ENCODE measurements at regions of chr6 and their contacts with region 1.

Region 1: GRCh38 chr6:43667245-43668150 is 20.1 kb downstream of the MRPS18A start:
- DNase-seq: no peak
- H3K4me3 ChIP-seq: peak overlapping the region; percentile 36
- CTCF ChIP-seq: peak; percentile 99

Region 2: DNA sequence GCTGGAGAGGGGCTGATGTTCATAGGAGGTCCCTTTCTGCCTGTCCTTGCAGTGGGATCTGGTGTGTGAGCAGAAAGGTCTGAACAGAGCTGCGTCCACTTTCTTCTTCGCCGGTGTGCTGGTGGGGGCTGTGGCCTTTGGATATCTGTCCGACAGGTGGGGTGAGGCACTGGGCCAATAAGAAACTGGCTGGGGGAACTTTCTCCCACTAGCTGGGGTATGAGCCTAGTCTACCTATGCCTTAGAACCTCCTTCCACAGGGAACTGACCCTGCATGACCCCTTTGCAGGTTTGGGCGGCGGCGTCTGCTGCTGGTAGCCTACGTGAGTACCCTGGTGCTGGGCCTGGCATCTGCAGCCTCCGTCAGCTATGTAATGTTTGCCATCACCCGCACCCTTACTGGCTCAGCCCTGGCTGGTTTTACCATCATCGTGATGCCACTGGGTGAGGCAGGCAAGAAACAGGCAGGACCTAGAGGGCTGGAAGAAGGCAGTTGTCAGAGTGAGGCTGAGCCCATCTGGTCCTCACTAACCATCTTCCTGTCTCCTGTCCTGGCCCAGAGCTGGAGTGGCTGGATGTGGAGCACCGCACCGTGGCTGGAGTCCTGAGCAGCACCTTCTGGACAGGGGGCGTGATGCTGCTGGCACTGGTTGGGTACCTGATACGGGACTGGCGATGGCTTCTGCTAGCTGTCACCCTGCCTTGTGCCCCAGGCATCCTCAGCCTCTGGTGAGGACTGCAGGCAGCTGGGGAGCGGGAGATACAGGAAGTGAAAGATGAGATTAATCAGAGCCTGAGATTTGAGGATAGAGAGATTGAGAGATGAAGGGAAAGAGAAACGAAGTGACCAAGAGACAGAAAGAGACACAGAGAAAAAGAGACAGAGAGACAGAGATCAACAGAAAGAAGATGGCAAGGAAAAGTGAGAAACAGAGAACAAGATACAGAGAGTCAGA is 367.9 kb before region 1 on chr6:
- CTCF ChIA-PET with region 1: no interaction called
- POLR2A ChIA-PET with region 1: no interaction called
- DNase-seq: no peak
- H3K4me3 ChIP-seq: no peak overlapping the region
- CTCF ChIP-seq: no peak

Region 3: DNA sequence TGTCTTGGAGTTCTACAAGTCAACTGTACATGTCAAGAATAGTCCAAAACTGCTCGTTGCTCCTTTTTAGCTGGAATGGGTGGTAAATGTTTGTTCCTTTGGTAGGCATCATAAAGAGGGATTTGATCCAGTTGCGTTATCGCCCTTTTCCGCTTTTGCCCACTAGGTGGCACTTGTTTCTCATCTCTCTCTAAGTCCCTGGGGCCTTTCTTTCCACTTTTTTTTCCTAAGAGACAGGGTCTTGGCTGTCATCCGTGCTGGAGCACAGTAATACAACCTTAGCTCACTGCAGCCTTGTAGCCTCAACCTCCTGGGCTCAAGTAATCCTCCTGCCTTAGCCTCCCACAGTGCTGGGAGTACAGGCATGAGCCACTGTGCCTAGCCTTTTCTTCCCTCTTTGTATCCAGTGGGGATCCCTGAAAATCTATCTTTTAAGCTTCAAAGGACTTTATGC is 59.2 kb before region 1 on chr6:
- CTCF ChIA-PET with region 1: interaction called, 14 read pairs
- POLR2A ChIA-PET with region 1: no interaction called
- DNase-seq: no peak
- H3K4me3 ChIP-seq: no peak overlapping the region
- CTCF ChIP-seq: peak; percentile 72

Region 4: DNA sequence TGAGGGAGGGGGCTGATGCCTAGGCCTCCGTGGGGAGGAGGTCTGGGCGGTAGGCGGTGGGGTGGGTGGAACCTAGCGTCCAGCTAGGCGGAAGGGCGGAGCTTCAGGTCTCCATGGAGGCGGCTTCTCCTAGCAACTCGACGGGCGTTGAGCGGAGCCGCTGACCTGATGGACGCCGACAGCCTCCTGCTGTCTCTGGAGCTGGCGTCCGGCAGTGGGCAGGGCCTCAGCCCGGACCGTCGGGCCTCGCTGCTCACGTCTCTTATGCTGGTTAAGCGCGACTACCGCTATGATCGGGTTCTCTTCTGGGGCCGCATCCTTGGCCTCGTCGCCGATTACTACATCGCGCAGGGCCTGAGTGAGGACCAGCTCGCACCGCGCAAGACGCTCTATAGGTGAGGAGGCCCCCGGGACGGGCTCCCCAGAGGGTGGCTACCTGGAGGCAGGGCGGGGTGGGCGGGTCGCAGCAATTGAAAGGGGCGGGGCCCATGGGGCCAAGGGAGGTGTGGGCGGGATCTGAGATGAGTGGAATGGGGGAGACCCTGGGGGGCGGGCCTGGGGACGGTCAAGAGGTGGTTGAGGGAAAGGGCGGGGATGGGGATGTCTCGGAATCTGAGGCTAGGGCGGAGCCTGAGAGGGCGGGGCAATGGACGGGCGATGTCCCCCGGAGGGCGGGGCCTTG is 22.4 kb before region 1 on chr6 and contains the start of gene RSPH9:
- CTCF ChIA-PET with region 1: interaction called, 46 read pairs
- POLR2A ChIA-PET with region 1: interaction called, 3 read pairs
- DNase-seq: no peak
- H3K4me3 ChIP-seq: peak within 1 kb of the TSS; percentile 57
- CTCF ChIP-seq: no peak

Region 5: GRCh38 chr6:43657221-43657802 is 10.2 kb before region 1 on chr6:
- CTCF ChIA-PET with region 1: interaction called, 46 read pairs
- POLR2A ChIA-PET with region 1: no interaction called
- DNase-seq: no peak
- H3K4me3 ChIP-seq: no peak overlapping the region
- CTCF ChIP-seq: no peak

Region 6: GRCh38 chr6:43687437-43688347 is 20.2 kb after region 1 on chr6 and contains the start of gene MRPS18A:
- CTCF ChIA-PET with region 1: interaction called, 74 read pairs
- POLR2A ChIA-PET with region 1: interaction called, 3 read pairs
- DNase-seq: no peak
- H3K4me3 ChIP-seq: peak within 1 kb of the TSS; percentile 92
- CTCF ChIP-seq: no peak

Region 7: GRCh38 chr6:43758617-43759050 is 91.1 kb after region 1 on chr6:
- CTCF ChIA-PET with region 1: interaction called, 18 read pairs
- POLR2A ChIA-PET with region 1: no interaction called
- DNase-seq: no peak
- H3K4me3 ChIP-seq: no peak overlapping the region
- CTCF ChIP-seq: peak; percentile 65

Measured in AG04449 (cell line).